Right lobe of liver (tissue), 6 donors: ENCODE measurements at regions of chr9 and their contacts with region 1.

Region 1: DNA sequence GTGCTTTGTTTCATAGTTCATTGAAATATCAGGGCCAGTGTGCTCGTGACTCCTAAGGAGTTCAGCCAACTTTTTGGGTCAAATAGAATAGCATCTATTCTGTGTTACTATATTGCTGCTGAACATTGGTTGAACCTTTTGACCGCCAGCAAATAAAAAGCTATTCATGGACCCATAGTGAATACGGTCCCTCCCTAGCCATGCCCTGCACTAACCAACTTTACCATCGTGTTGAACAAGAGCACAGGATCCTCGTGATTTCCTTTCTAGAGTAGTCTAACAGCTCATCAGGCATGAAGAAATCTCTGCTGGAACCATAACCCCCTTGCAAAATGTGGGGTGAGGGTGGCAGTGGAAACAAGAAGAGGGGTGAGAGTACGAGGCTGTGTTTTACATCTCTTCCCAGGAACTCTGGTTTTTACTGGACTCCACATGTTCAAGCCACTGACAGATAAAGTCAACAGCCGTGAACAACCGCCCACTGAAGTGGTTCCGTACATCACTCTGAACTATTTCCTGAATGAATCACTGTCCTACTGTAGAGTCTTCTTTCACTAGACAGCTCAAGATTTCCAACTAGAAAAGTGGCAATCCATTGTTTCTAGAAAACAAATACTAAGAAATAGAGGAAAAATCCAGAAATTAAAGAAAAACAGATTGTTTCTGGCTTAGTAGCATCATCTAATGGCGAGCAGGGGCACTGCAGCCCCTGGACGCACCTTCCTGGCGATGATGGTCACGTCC is 70.1 kb upstream of the SPATA31E1 start:
- DNase-seq: no peak
- ATAC-seq: peak; percentile 79 to 84 (median 80)
- H3K4me3 ChIP-seq: no peak overlapping the region
- H3K27ac ChIP-seq: no peak overlapping the region
- H3K4me1 ChIP-seq: peaks cover 0 to 10% (median 5%) of the 10 kb centered on the region in 4 donors
- H3K27me3 ChIP-seq: no peaks in the 10 kb centered on the region
- CTCF ChIP-seq: peak; percentile 91 to 97 (median 94)
- POLR2A ChIP-seq: no peak

Region 2: DNA sequence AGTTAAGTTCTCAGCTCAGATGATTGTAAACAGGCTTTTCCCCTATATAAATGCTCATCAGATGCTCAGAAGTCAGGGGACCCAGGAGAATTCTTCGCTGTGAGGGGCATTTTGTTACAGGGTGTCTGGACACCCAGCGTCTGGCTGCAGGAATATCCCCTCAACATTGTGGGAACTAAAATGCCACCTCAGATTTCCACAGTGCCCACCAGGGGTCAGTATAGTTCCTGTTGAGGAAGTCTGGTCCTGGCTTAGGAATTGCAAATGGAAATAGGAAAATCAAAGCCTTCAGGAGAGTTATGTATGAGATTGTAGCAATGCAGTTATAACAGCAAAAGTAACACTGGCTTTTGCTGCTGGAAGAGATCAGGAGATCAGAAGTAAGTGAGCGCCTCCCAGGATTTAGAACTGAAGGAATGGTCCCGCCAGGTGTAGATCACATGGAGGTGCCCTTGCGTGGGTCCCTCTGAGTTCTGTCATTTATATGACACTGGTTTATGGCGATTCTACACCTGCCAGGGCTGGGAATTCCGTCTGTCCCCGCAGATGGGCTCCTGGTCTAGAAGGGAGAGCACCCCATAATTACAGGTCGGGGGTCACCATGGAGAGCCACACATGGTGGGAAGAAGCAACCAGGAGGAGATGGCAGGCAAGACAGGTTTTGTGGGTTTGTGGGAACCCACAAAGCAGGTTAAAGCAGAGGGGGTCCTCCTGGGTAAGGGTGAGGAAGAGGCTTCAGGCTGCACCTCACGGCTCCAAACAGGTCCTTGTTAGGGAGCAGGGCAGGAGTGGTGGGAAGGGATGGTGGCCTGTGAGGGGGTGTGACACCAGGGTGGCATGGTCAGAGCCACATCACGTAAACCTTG is 133.7 kb before region 1 on chr9:
- intact Hi-C with region 1: loop called (anchors 5 to 10 kb)
- DNase-seq: peak in 1 of 3 donors; percentile 61
- ATAC-seq: peak; percentile 58 to 65 (median 64)
- H3K4me3 ChIP-seq: no peak overlapping the region
- H3K27ac ChIP-seq: no peak overlapping the region
- H3K4me1 ChIP-seq: peaks cover 0 to 17% (median 7%) of the 10 kb centered on the region in 4 donors
- H3K27me3 ChIP-seq: no peaks in the 10 kb centered on the region
- CTCF ChIP-seq: peak; percentile 73 to 78 (median 76)
- POLR2A ChIP-seq: no peak

Region 3: GRCh38 chr9:87684627-87685219 is 127.8 kb before region 1 on chr9:
- intact Hi-C with region 1: loop called (anchors 5 to 10 kb)
- DNase-seq: no peak
- ATAC-seq: peak; percentile 34 to 54 (median 38)
- H3K4me3 ChIP-seq: no peak overlapping the region
- H3K27ac ChIP-seq: peak overlapping the region; percentile 29 to 73 (median 33)
- H3K4me1 ChIP-seq: peaks cover 0 to 33% (median 7%) of the 10 kb centered on the region in 4 donors
- H3K27me3 ChIP-seq: no peaks in the 10 kb centered on the region
- CTCF ChIP-seq: peak; percentile 61 to 86 (median 74)
- POLR2A ChIP-seq: no peak

Region 4: GRCh38 chr9:87872079-87872624 is 59.6 kb after region 1 on chr9:
- intact Hi-C with region 1: no loop called
- DNase-seq: no peak
- ATAC-seq: no peak
- H3K4me3 ChIP-seq: no peak overlapping the region
- H3K27ac ChIP-seq: no peak overlapping the region
- H3K4me1 ChIP-seq: no peaks in the 10 kb centered on the region
- H3K27me3 ChIP-seq: no peaks in the 10 kb centered on the region
- CTCF ChIP-seq: no peak
- POLR2A ChIP-seq: no peak

Region 5: DNA sequence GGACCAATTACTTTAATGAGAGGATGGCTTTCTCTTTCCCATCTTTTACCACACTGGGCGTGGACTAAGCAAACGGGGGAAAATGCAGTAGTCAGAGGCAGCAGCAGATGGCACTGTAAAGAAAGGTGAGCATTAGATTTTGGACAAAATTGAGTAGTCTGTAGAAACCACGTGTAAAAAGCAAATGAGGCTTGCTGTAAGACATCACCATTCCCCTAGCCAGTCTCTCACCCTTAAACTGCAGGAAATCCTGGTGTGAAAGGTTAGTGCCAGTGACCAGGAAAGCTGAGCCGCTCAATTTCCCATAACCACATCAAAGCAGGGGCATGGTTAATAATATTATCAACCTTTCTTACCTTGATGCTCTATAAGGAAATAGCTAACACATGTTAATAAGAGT is 293.9 kb after region 1 on chr9:
- intact Hi-C with region 1: no loop called
- DNase-seq: no peak
- ATAC-seq: peak; percentile 82 to 99 (median 92)
- H3K4me3 ChIP-seq: no peak overlapping the region
- H3K27ac ChIP-seq: no peak overlapping the region
- H3K4me1 ChIP-seq: no peaks in the 10 kb centered on the region
- H3K27me3 ChIP-seq: no peaks in the 10 kb centered on the region
- CTCF ChIP-seq: peak; percentile 58 to 82 (median 64)
- POLR2A ChIP-seq: no peak